ENCODE measurements at regions of chr2 and their contacts with region 1.

Region 1: DNA sequence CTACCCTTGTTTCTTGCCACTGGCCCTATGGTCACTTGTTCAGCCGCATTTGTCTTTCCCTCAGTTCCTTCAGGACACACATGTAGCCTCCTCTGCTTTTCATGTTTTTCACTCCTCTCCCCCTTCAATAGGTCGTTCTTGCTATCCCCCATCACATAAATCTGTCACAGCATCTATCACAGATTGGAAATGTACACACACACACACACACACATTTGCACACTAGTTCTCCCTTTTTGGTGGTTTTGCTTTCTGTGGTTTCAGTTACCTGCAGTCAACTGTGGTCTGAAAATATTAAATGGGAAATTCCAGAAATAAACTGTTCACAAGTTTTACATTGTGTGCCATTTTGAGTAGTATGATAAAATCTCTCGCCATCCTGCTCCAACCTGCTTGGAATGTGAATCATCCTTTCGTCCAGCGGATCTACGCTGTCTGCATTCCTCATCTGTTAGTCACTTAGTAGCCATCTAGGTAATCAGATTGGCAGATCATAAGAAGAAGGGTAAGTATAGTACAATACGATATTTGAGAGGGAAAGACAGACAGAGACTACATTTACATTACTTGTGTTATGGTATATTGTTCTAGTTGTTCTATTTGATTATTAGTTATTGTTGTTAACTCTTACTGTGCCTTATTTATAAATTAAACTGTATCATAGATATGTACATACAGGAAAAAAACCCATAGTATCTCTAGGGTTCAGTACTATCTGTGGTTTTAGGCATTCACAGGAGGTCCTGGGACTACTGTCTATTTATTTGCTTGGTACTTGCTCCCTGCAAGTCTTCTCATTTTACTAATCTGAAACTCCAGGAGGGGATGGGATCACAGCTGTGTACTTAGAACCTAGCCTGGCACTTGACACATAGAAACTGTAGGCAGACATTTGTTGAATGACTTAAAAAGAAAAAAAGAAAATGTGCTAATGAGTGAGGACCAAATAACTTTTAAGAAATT is 86.1 kb upstream of the PNPT1 start:
- DNase-seq: no peak
- ATAC-seq: no peak
- H3K4me3 ChIP-seq: no peak overlapping the region
- H3K27ac ChIP-seq: no peak overlapping the region
- H3K4me1 ChIP-seq: no peaks in the 10 kb centered on the region
- H3K27me3 ChIP-seq: no peaks in the 10 kb centered on the region
- CTCF ChIP-seq: no peak
- POLR2A ChIP-seq: no peak

Region 2: DNA sequence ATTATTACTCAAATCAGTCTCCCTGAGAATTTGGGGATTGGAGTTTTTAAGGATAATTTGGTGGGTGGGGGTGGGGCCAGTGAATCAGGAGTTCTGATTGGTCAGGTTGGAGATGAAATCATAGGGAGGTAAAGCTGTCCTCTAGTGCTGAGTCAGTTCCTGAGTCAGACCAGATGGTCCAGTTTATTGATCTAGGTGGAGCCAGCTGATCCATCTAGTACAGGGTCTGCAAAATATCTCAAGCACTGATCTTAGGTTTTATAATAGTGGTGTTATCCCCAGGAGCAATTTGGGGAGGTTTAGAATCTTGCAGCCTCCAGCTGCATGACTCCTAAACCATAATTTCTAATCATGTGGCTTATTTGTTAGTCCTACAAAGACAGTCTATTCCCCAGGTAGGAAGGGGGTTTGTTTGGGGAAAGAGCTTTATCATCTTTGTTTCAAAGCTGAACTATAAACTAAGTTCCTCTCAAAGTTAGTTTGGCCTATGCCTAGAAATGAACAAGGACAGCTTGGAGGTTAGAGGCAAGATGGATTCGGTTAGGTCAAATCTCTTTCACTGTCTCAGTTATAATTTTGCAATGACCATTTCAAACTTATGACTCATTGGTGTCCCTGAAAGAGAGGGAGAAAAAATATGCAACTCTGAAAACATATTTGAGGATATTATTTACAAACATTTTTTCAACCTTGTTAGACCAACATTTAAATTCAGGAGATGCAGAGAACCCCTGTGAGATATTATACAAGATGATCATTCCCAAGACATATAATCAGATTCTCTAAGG is 47.9 kb after region 1 on chr2:
- intact Hi-C with region 1: no loop called
- DNase-seq: no peak
- ATAC-seq: no peak
- H3K4me3 ChIP-seq: no peak overlapping the region
- H3K27ac ChIP-seq: no peak overlapping the region
- H3K4me1 ChIP-seq: no peaks in the 10 kb centered on the region
- H3K27me3 ChIP-seq: no peaks in the 10 kb centered on the region
- CTCF ChIP-seq: no peak
- POLR2A ChIP-seq: no peak

Region 3: DNA sequence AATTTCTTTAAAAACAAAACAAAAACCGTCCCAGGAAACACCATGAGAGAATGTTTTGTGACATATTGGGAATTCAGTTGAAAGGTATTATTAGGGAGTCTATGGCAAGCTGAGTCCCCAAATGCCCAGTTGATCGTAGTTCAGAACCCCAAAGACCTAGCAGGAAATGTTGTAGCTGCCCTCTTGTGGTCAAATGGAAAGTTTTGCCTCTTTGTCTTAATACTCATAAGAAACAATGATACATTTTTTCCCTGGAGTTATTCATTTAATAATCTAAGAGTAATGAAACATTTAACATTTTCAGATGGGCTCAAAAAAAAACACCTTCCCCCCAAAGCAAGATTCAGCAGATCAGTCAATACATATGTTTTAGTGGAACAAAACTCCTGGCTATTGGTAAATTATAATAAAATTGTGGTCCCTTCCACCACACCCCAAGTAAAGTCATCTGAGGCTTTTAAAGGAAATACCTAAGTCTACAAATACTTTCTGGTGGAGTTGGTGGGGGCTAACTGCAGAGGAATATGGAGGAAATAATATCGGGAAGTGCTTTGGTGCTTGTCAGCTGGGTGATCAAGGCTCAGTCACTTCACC is 181.7 kb after region 1 on chr2:
- intact Hi-C with region 1: loop called in 5 of 10 experiments (anchors 2 to 5 kb)
- DNase-seq: no peak
- ATAC-seq: peak in 2 of 4 donors; percentile 46 to 53
- H3K4me3 ChIP-seq: no peak overlapping the region
- H3K27ac ChIP-seq: no peak overlapping the region
- H3K4me1 ChIP-seq: peaks cover 0 to 10% (median 0%) of the 10 kb centered on the region in 12 donors
- H3K27me3 ChIP-seq: no peaks in the 10 kb centered on the region
- CTCF ChIP-seq: peak; percentile 40 to 67 (median 50)
- POLR2A ChIP-seq: no peak

Region 4: DNA sequence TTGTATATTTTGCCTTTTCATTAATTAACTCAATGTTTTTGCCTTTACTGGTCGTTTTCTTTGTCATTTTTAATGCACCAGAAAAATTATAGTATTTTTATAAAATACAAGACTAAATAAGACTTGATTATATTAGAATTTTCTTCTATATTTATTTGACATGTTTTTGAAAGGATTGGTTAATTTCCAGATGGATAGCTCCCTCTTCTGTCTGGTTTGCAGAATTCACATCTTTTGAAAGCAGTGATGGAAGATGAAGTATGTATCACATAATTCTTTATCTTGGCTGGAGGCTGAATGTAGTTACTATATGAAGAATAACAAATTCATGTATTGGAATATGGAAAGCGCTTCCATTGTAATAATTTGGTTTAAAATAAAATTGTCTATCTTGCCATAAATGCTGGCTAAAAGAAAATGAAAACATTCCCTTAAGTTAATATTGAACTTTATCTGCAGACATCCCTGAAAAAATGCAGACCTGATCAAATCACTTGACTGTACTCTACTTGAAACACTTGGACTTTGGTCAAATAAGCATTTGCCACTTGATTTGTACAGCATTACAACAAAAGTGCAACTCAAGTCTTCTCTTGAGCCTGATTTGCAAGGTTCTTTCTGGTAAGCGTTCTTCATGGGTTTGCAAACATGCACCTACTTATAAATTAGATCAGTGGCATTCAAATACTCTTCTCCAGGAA is 230.2 kb after region 1 on chr2:
- intact Hi-C with region 1: loop called in 4 of 10 experiments (anchors 5 kb)
- DNase-seq: no peak
- ATAC-seq: peak in 2 of 4 donors; percentile 41 to 58
- H3K4me3 ChIP-seq: no peak overlapping the region
- H3K27ac ChIP-seq: peak overlapping the region in 2 of 12 donors; percentile 1 to 46
- H3K4me1 ChIP-seq: peaks cover 0 to 22% (median 3%) of the 10 kb centered on the region in 12 donors
- H3K27me3 ChIP-seq: peaks cover 0 to 6% (median 0%) of the 10 kb centered on the region in 9 donors
- CTCF ChIP-seq: peak; percentile 25 to 69 (median 57)
- POLR2A ChIP-seq: no peak

Region 5: GRCh38 chr2:56068746-56069145 is 289.0 kb after region 1 on chr2:
- intact Hi-C with region 1: no loop called
- DNase-seq: no peak
- ATAC-seq: no peak
- H3K4me3 ChIP-seq: no peak overlapping the region
- H3K27ac ChIP-seq: no peak overlapping the region
- H3K4me1 ChIP-seq: no peaks in the 10 kb centered on the region
- H3K27me3 ChIP-seq: no peaks in the 10 kb centered on the region
- CTCF ChIP-seq: no peak
- POLR2A ChIP-seq: no peak

Measured in heart left ventricle (tissue), 16 donors.